Right ventricle myocardium superior (tissue), 1 donor: ENCODE measurements at regions of chr2 and their contacts with region 1.

Region 1: DNA sequence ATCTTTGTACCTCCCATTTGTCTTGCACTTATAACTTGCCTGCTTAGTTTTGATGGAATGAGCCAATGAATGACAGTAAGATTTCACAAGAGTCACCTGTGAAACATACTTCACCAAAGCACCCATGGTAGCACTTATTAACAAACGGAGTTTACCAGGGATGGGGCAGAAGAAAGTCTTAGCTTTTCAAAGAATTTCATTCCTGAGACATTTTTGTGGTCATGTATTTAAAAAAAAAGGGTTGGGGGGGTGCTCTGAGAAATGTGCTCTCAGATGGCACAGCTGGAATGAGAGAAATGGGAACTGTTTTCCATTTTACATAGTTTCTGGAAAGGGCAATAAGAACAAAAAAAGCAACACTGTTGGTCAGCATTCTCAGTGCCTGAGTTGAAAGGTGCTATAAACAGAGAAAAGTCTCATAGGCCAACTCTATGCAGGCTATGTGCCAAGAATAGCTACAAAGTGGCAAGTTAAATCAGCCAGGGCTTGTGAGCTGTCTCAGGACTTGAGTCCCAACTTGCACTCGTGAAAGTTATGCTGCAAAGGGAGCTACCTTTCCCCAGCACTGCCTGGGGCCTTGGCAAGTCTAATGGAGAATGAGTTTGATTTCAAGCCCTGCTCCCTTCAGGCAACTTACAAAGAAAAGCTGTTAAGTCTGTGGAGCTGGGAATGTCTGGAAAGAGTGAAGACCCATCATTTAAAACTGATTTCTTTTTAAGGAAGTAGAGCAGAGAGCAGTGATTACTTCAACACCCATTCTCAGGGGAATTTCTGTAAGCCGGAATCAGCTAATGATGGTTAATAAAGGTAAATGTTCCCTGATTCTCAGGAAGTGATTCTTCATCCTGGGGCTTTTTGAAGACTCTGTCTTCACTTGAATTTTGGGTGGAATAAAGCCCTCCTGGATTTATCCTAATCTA is 170.6 kb downstream of the SLC8A1 start:
- DNase-seq: no peak
- ATAC-seq: peak; percentile 73

Region 2: GRCh38 chr2:40363631-40364030 is 82.3 kb after region 1 on chr2:
- intact Hi-C with region 1: loop called (anchors 10 kb)
- DNase-seq: no peak
- ATAC-seq: peak; percentile 16